ENCODE measurements at regions of chr11 and their contacts with region 1.

Region 1: GRCh38 chr11:67252831-67253239 is 13.4 kb upstream of the GRK2 start:
- DNase-seq: no peak
- H3K4me3 ChIP-seq: no peak overlapping the region
- CTCF ChIP-seq: peak; percentile 48

Region 2: GRCh38 chr11:67178878-67179277 is 74.0 kb before region 1 on chr11:
- in situ Hi-C with region 1: loop called (anchors 10 kb)
- DNase-seq: no peak
- H3K4me3 ChIP-seq: no peak overlapping the region
- CTCF ChIP-seq: no peak

Region 3: DNA sequence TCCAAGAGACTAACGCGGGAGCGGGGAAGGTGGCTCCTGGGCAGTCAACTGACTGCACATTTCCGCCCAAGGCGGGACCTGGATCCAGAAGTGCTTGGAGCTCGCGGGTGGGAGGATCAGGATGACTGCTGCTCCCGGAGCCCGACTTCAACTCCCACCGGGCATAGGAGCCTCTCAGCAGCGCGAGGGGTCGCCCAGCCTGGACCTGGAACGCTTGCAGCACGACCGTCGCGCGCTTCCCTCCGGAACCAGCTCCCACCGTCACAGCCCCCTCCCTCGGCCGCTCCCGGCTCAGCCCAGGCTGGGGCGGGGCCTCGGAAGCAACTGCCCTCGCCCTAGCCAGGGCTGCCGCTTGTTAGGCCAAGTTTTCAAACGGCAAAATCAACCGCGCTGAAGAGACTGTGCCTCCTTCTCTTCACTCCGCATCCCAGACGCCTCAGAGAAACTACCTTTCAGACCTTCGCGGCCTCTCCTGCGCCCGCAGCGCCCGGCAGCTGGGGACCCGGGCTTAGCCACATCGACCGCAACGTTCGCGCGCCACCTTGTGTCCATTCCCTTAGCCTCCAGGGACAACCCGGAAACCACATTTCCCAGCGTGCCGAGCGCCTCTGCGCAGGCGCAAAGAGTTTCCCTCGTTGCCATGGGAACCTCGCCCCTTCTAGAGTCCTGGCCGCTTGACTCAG is 64.5 kb after region 1 on chr11:
- in situ Hi-C with region 1: loop called (anchors 10 kb)
- DNase-seq: peak; percentile 88
- H3K4me3 ChIP-seq: peak overlapping the region; percentile 75
- CTCF ChIP-seq: peak; percentile 85